ENCODE measurements at regions of chr2 and their contacts with region 1.

Region 1: DNA sequence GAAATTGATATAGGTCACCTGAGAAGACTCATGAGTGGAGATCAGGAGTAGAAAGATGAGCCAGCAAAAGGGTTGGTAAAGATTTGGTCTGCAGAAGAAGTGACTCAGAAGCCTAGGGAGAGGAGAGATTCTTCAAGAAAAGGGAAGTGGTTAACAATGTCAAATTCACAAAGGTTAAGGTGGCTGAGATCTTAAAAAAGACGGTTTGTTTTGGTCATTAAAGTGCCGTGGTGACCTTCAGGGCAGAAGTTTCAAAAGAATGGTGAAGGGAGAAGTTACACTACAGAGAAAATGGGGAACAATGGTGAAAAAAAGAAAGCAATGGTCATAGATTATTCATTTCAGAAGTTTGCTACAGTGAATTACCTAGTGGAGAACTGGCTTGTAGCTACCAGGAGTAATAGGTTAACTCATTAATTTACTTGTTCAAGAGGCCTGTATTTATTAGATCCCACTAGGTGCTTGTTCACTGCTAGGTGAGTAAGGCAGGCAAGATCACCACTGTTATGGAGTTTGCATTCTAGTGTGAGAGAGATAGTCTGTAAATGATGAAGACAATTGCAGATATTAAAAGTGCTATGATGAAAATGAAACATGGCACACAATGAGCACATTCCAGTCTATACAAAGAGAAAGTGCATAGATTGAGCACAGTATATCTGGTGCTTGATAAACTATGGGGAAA is 43.0 kb downstream of the FBXO48 start:
- DNase-seq: peak; percentile 81
- H3K4me3 ChIP-seq: peak overlapping the region; percentile 39
- H3K27ac ChIP-seq: peak overlapping the region; percentile 88
- H3K4me1 ChIP-seq: peaks cover 90% of the 10 kb centered on the region
- CTCF ChIP-seq: no peak

Region 2: GRCh38 chr2:68411397-68412126 is 12.5 kb before region 1 on chr2:
- CTCF ChIA-PET with region 1: interaction called, 8 read pairs
- POLR2A ChIA-PET with region 1: interaction called, 103 read pairs
- intact Hi-C with region 1: no loop called
- DNase-seq: peak; percentile 91
- H3K4me3 ChIP-seq: peak overlapping the region; percentile 47
- H3K27ac ChIP-seq: peak overlapping the region; percentile 92
- H3K4me1 ChIP-seq: peaks cover 57% of the 10 kb centered on the region
- CTCF ChIP-seq: no peak

Region 3: GRCh38 chr2:68435615-68436014 is 11.5 kb after region 1 on chr2:
- CTCF ChIA-PET with region 1: interaction called, 5 read pairs
- POLR2A ChIA-PET with region 1: interaction called, 103 read pairs
- intact Hi-C with region 1: no loop called
- DNase-seq: no peak
- H3K4me3 ChIP-seq: no peak overlapping the region
- H3K27ac ChIP-seq: no peak overlapping the region
- H3K4me1 ChIP-seq: peaks cover 51% of the 10 kb centered on the region
- CTCF ChIP-seq: no peak

Measured in OCI-LY7 (cell line).